Endothelial cell of umbilical vein (primary cell): ENCODE measurements at regions of chr7 and their contacts with region 1.

Region 1: GRCh38 chr7:16114633-16115032 is 306.7 kb downstream of the CRPPA start:
- DNase-seq: peak; percentile 53
- H3K4me3 ChIP-seq: no peak overlapping the region
- H3K27ac ChIP-seq: no peak overlapping the region
- H3K4me1 ChIP-seq: no peaks in the 10 kb centered on the region
- H3K27me3 ChIP-seq: no peaks in the 10 kb centered on the region
- CTCF ChIP-seq: peak; percentile 17 to 25
- POLR2A ChIP-seq: no peak

Region 2: DNA sequence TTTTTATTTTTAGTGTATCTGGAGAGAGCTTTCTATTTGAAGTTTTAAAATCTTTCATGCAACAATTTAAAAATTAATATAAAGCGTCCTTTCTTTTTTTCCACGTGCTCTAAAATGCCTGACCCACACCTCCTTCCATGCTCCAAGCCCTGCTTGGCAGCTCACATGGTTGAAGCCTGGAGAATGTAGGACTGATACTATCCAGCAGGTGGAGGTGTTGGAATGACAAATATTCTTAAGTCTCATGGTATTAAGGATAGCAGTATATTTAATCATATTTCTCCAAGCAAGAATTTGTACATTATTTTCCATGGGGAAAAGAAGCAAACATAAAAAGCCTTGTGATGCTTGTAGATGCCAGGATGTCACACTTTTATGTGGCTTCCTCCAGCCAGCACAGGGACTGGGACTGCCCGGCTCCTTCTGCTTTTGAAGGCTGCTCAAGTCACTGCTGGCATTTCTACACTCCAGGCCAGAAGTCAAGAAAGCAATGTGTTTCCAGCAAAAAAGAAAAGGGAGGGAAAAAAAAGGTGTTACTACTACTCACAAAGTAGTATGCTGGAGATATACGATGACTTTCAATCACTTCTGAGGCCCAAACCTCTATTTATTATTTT is 581.1 kb after region 1 on chr7:
- CTCF ChIA-PET with region 1: interaction called, 4 read pairs
- POLR2A ChIA-PET with region 1: no interaction called
- dilution Hi-C with region 1: no loop called
- intact Hi-C with region 1: loop called (anchors 1 kb)
- DNase-seq: peak; percentile 74
- H3K4me3 ChIP-seq: no peak overlapping the region
- H3K27ac ChIP-seq: no peak overlapping the region
- H3K4me1 ChIP-seq: peaks cover 7% of the 10 kb centered on the region
- H3K27me3 ChIP-seq: no peaks in the 10 kb centered on the region
- CTCF ChIP-seq: peak; percentile 44 to 54
- POLR2A ChIP-seq: no peak